Sigmoid colon (tissue), 7 donors: ENCODE measurements at regions of chrX and their contacts with region 1.

Region 1: GRCh38 chrX:138711399-138712347 is at the start of gene FGF13:
- DNase-seq: peak; percentile 68
- H3K4me3 ChIP-seq: peak within 1 kb of the TSS; percentile 43 to 63 (median 54)
- H3K27ac ChIP-seq: peak within 1 kb of the TSS; percentile 68 to 76 (median 70)
- H3K4me1 ChIP-seq: no peaks in the 10 kb centered on the region
- H3K27me3 ChIP-seq: no peaks in the 10 kb centered on the region
- CTCF ChIP-seq: peak in 2 of 4 experiments; percentile 31 to 39
- EP300 ChIP-seq: no peak
- POLR2A ChIP-seq: no peak
- total RNA-seq, gene FGF13: 9.6 to 15.0 (median 12.6) TPM

Region 2: DNA sequence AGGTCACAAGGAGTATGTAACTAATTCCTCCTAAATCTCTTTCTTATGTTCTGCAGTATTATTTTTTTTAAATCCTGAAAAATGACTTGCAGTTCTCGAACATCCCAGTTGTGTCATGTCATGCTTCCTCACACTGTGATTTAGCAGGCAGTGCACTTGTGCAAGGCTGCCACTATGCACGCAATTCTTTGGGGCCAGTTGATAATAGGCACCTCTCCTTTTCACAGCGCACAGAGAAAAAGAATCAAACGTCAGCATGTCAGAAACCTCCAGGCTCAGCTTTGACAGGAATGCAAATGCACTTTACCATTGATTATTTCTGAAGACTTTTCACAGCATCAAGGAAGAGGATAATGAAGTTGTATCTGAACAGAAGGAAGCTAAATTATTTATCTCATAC is 63.1 kb before region 1 on chrX:
- intact Hi-C with region 1: loop called (anchors 5 kb)
- DNase-seq: no peak
- H3K4me3 ChIP-seq: no peak overlapping the region
- H3K27ac ChIP-seq: peak overlapping the region in 1 of 4 donors; percentile 10
- H3K4me1 ChIP-seq: peaks cover 0 to 8% (median 0%) of the 10 kb centered on the region in 4 donors
- H3K27me3 ChIP-seq: no peaks in the 10 kb centered on the region
- CTCF ChIP-seq: no peak
- EP300 ChIP-seq: no peak
- POLR2A ChIP-seq: no peak